Naive thymus-derived CD4-positive, alpha-beta T cell (primary cell): ENCODE measurements at regions of chr14 and their contacts with region 1.

Region 1: GRCh38 chr14:35134328-35135123 is 12.2 kb downstream of the PRORP start:
- DNase-seq: no peak
- ATAC-seq: no peak
- H3K4me3 ChIP-seq: no peak overlapping the region
- H3K4me3 Mint-ChIP-seq: peak overlapping the region in 1 of 10 donors; percentile 8
- H3K27ac ChIP-seq: no peak overlapping the region
- H3K27ac Mint-ChIP-seq: peak overlapping the region in 4 of 9 donors; percentile 28 to 67 (median 34)
- H3K4me1 ChIP-seq: no peaks in the 10 kb centered on the region
- H3K4me1 Mint-ChIP-seq: peaks cover 13 to 36% (median 22%) of the 10 kb centered on the region in 7 donors
- H3K27me3 ChIP-seq: no peaks in the 10 kb centered on the region
- H3K27me3 Mint-ChIP-seq: no peaks in the 10 kb centered on the region

Region 2: GRCh38 chr14:35116242-35116641 is 18.3 kb before region 1 on chr14:
- CTCF ChIA-PET with region 1: no interaction called
- POLR2A ChIA-PET with region 1: no interaction called
- intact Hi-C with region 1: no loop called
- DNase-seq: no peak
- ATAC-seq: no peak
- H3K4me3 ChIP-seq: no peak overlapping the region
- H3K4me3 Mint-ChIP-seq: no peak overlapping the region
- H3K27ac ChIP-seq: no peak overlapping the region
- H3K27ac Mint-ChIP-seq: peak overlapping the region in 1 of 9 donors; percentile 54
- H3K4me1 ChIP-seq: peaks cover 0 to 4% of the 10 kb centered on the region in 2 donors
- H3K4me1 Mint-ChIP-seq: peaks cover 23 to 71% (median 48%) of the 10 kb centered on the region in 7 donors
- H3K27me3 ChIP-seq: no peaks in the 10 kb centered on the region
- H3K27me3 Mint-ChIP-seq: no peaks in the 10 kb centered on the region

Region 3: GRCh38 chr14:35146711-35147149 is 12.2 kb after region 1 on chr14:
- CTCF ChIA-PET with region 1: interaction called, 3 read pairs
- POLR2A ChIA-PET with region 1: no interaction called
- intact Hi-C with region 1: loop called in 1 of 2 experiments (anchors 1 kb)
- DNase-seq: no peak
- ATAC-seq: no peak
- H3K4me3 ChIP-seq: no peak overlapping the region
- H3K4me3 Mint-ChIP-seq: no peak overlapping the region
- H3K27ac ChIP-seq: no peak overlapping the region
- H3K27ac Mint-ChIP-seq: peak overlapping the region in 1 of 9 donors; percentile 42
- H3K4me1 ChIP-seq: no peaks in the 10 kb centered on the region
- H3K4me1 Mint-ChIP-seq: peaks cover 11 to 23% (median 17%) of the 10 kb centered on the region in 7 donors
- H3K27me3 ChIP-seq: no peaks in the 10 kb centered on the region
- H3K27me3 Mint-ChIP-seq: no peaks in the 10 kb centered on the region

Region 4: GRCh38 chr14:35576260-35576659 is 441.7 kb after region 1 on chr14:
- CTCF ChIA-PET with region 1: no interaction called
- POLR2A ChIA-PET with region 1: no interaction called
- intact Hi-C with region 1: no loop called
- DNase-seq: no peak
- ATAC-seq: no peak
- H3K4me3 ChIP-seq: no peak overlapping the region
- H3K4me3 Mint-ChIP-seq: no peak overlapping the region
- H3K27ac ChIP-seq: no peak overlapping the region
- H3K27ac Mint-ChIP-seq: no peak overlapping the region
- H3K4me1 ChIP-seq: no peaks in the 10 kb centered on the region
- H3K4me1 Mint-ChIP-seq: peaks cover 0 to 6% (median 0%) of the 10 kb centered on the region in 7 donors
- H3K27me3 ChIP-seq: no peaks in the 10 kb centered on the region
- H3K27me3 Mint-ChIP-seq: no peaks in the 10 kb centered on the region